Panc1 (cell line): ENCODE measurements at regions of chr2 and their contacts with region 1.

Region 1: DNA sequence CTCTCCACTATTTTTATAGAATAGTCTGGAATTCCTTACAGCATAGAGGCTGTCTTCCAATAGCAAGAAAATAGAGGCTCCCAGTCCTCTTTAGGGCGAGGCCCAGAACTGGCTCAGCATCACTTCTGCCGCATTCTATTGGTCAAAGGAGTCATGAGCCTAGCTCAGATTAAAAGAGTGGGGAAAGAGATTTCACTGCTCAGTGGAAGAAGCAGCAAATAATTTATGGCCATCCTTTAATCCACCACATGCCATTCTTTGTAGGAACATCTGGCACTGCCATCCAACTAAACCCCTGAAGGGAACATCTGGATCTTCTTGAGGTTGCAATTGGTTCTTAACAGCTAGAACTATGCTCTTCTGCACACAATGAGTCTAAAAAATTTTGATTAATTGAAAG is 43.4 kb upstream of the NEUROD1 start:
- DNase-seq: no peak
- ATAC-seq: no peak
- H3K4me3 ChIP-seq: no peak overlapping the region
- H3K27ac ChIP-seq: no peak overlapping the region
- H3K4me1 ChIP-seq: no peaks in the 10 kb centered on the region
- H3K27me3 ChIP-seq: no peaks in the 10 kb centered on the region
- CTCF ChIP-seq: no peak

Region 2: DNA sequence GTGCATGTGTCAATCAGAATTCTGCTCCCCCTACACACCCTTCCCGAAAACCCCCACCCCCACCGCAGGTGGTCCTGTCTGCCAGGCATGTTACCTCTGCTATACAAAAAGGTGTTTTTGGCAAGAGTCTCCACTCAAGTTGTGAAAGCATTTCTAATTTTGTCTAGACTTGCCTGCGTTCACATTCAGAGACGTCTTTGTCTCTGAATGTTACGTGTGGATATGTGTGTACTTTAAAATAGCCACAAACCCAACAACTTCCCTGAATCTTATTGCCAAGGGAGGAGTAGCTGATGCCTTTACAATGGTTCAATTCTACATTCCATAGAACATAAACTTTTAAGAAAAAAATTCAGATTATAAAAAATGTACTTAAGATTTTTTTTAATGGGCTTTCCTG is 200.0 kb before region 1 on chr2:
- CTCF ChIA-PET with region 1: no interaction called
- POLR2A ChIA-PET with region 1: interaction called, 22 read pairs
- in situ Hi-C with region 1: no loop called
- intact Hi-C with region 1: no loop called
- DNase-seq: no peak
- ATAC-seq: no peak
- H3K4me3 ChIP-seq: no peak overlapping the region
- H3K27ac ChIP-seq: no peak overlapping the region
- H3K4me1 ChIP-seq: no peaks in the 10 kb centered on the region
- H3K27me3 ChIP-seq: no peaks in the 10 kb centered on the region
- CTCF ChIP-seq: no peak